ENCODE measurements at regions of chr1 and their contacts with region 1.

Region 1: DNA sequence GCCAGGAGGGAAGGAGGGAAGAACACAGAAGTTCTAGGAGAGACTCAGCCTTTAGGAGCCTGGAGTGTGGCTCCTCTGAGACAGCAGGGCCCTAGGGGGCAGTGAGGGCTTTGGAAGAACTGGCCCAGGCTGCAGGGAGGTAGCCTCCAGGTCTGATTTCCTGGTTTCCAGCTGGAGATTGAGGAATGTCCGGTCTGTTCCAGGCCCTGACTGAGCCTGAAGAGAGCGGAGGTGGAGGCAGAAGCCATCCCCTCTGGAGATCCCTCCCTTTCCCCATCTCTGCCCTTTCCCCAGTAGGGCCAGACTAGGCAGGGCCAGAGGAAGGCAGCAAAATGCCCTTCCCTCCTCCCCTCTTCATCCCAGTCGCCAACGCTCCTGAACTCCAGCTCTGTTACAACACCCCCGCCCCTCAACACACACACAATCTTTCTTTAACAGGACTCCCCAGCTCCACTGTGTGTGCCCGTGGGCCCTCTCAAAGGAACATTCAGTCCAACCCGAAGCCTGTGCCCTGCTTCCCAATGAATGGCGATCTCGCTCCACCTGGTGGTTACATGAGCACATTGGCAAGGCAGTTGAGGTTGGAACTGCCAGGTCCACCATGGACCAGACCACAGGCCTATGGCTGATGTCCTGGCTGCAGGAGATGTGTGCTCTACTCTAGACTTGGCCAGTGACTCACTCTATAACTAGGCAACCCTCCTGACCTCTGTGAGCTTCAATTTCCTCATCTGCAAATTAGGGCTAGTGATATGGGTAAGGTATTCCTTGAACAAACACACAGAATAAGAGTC is 32.0 kb downstream of the MAP7D1 start:
- DNase-seq: peak; percentile 47
- H3K4me3 ChIP-seq: no peak overlapping the region
- H3K27ac ChIP-seq: peak overlapping the region; percentile 67 to 91 (median 84)
- H3K4me1 ChIP-seq: peaks cover 5 to 20% (median 9%) of the 10 kb centered on the region in 3 donors
- H3K27me3 ChIP-seq: no peaks in the 10 kb centered on the region
- CTCF ChIP-seq: peak; percentile 79 to 95 (median 92)
- POLR2A ChIP-seq: no peak

Region 2: GRCh38 chr1:36115200-36115669 is 72.8 kb before region 1 on chr1:
- intact Hi-C with region 1: no loop called
- DNase-seq: no peak
- H3K4me3 ChIP-seq: peak overlapping the region in 1 of 4 donors; percentile 2
- H3K27ac ChIP-seq: peak overlapping the region; percentile 15 to 83 (median 70)
- H3K4me1 ChIP-seq: peaks cover 0 to 35% (median 10%) of the 10 kb centered on the region in 3 donors
- H3K27me3 ChIP-seq: no peaks in the 10 kb centered on the region
- CTCF ChIP-seq: no peak
- POLR2A ChIP-seq: no peak

Region 3: DNA sequence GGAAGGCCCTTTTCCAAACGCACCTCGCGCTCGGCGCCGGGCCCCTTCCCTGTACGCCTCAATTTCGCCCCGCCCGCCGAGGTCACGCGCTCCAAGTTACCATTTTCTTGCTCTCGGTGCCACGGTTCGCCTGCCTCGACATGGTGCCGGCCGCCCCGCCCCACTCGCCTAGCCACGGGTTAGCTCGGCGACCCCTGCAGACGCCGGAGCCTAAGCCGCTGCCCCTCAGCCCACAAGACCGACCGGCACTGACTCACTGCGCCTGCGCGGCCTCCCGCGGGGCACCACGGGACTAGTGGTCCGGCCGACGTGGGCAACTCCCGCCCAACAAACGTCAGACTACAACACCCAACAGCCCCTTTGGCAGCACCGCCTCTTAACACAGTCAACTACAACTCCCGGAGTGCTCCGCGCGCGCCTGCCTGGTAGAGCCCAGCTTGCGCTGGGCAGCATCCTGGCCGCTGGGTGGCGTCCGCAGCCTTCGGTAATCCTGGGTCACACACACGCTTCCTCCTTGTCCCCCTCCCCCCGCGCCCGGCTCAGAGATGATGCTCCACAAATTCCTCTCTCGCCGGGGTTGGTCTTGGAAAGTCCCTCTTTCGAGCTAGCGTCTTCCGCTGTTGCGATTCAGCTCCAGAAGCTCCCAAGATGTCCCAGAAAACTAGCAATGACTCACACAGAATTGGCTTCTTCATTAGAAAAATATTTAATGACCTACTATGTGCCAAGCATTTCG is 38.6 kb before region 1 on chr1 and contains the start of gene TRAPPC3:
- intact Hi-C with region 1: loop called (anchors 5 kb)
- DNase-seq: peak; percentile 99
- H3K4me3 ChIP-seq: peak within 1 kb of the TSS; percentile 68 to 95 (median 72)
- H3K27ac ChIP-seq: peak within 1 kb of the TSS; percentile 95 to 98 (median 98)
- H3K4me1 ChIP-seq: peaks cover 27 to 65% (median 35%) of the 10 kb centered on the region in 3 donors
- H3K27me3 ChIP-seq: no peaks in the 10 kb centered on the region
- CTCF ChIP-seq: peak; percentile 83 to 99 (median 98)
- POLR2A ChIP-seq: peak in 3 of 4 donors; percentile 71 to 92 (median 89)
- total RNA-seq, gene TRAPPC3: 68.3 to 132 (median 112) TPM

Region 4: GRCh38 chr1:36300526-36300925 is 112.5 kb after region 1 on chr1:
- intact Hi-C with region 1: no loop called
- DNase-seq: no peak
- H3K4me3 ChIP-seq: no peak overlapping the region
- H3K27ac ChIP-seq: peak overlapping the region; percentile 69 to 81 (median 72)
- H3K4me1 ChIP-seq: peaks cover 10 to 22% (median 11%) of the 10 kb centered on the region in 3 donors
- H3K27me3 ChIP-seq: no peaks in the 10 kb centered on the region
- CTCF ChIP-seq: no peak
- POLR2A ChIP-seq: no peak